Gastrocnemius medialis (tissue), 4 donors: ENCODE measurements at regions of chr16 and their contacts with region 1.

Region 1: GRCh38 chr16:46853713-46854443 is 22.9 kb upstream of the C16orf87 start:
- DNase-seq: peak; percentile 58 to 72
- ATAC-seq: peak; percentile 77 to 78
- H3K4me3 ChIP-seq: no peak overlapping the region
- H3K27ac ChIP-seq: no peak overlapping the region
- H3K4me1 ChIP-seq: peaks cover 8 to 14% of the 10 kb centered on the region in 2 donors
- H3K27me3 ChIP-seq: no peaks in the 10 kb centered on the region
- CTCF ChIP-seq: peak; percentile 78 to 92 (median 88)
- POLR2A ChIP-seq: no peak

Region 2: GRCh38 chr16:46899443-46900143 is 45.7 kb after region 1 on chr16:
- in situ Hi-C with region 1: loop called in 2 of 4 experiments (anchors 5 kb)
- intact Hi-C with region 1: loop called (anchors 2 kb)
- DNase-seq: no peak
- ATAC-seq: no peak
- H3K4me3 ChIP-seq: no peak overlapping the region
- H3K27ac ChIP-seq: peak overlapping the region; percentile 48 to 63 (median 56)
- H3K4me1 ChIP-seq: peaks cover 28 to 39% of the 10 kb centered on the region in 2 donors
- H3K27me3 ChIP-seq: no peaks in the 10 kb centered on the region
- CTCF ChIP-seq: no peak
- POLR2A ChIP-seq: no peak

Region 3: DNA sequence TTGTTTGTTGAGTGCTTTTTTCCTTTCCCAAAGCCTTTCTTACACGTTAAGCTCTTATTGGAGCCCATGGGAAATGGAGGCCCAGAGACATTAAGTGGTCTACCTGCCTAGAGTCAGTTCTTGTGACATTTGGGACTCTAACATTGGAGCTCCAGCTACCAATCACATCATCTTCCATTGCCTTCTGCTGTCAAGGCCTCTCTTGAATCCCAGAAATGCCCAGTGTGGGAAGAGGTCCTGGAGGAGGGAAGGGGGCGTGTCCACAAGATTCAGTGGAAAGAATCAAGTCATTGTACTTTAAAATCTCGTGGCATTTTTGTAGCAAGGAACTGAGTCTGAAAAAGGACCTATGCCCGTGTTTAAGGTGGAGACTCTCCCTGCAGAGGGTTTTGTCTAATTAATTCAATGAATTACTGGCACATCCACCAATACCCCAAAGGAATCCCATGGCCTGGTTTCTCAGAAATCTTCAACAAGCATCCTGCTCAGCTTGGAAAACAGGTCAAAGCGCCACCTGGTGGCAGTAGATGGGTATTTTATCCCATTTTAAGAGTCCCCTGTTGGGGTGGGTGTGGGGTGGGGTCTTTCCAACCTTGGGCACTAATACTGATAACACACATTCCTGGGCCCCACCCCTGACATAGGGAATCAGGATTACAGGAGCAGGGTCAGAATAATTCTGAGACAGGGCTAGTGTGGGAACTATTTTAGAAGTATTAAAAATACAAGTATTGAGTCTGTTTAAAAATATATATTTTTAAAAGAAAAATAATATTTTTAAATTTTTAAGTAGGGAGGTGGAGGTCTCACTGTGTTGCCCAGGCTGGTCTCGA is 54.9 kb after region 1 on chr16:
- in situ Hi-C with region 1: loop called (anchors 5 kb)
- intact Hi-C with region 1: loop called (anchors 1 kb)
- DNase-seq: no peak
- ATAC-seq: peak; percentile 53 to 72
- H3K4me3 ChIP-seq: no peak overlapping the region
- H3K27ac ChIP-seq: peak overlapping the region in 2 of 4 donors; percentile 12 to 32
- H3K4me1 ChIP-seq: peaks cover 15 to 17% of the 10 kb centered on the region in 2 donors
- H3K27me3 ChIP-seq: no peaks in the 10 kb centered on the region
- CTCF ChIP-seq: peak; percentile 54 to 90 (median 83)
- POLR2A ChIP-seq: no peak

Region 4: DNA sequence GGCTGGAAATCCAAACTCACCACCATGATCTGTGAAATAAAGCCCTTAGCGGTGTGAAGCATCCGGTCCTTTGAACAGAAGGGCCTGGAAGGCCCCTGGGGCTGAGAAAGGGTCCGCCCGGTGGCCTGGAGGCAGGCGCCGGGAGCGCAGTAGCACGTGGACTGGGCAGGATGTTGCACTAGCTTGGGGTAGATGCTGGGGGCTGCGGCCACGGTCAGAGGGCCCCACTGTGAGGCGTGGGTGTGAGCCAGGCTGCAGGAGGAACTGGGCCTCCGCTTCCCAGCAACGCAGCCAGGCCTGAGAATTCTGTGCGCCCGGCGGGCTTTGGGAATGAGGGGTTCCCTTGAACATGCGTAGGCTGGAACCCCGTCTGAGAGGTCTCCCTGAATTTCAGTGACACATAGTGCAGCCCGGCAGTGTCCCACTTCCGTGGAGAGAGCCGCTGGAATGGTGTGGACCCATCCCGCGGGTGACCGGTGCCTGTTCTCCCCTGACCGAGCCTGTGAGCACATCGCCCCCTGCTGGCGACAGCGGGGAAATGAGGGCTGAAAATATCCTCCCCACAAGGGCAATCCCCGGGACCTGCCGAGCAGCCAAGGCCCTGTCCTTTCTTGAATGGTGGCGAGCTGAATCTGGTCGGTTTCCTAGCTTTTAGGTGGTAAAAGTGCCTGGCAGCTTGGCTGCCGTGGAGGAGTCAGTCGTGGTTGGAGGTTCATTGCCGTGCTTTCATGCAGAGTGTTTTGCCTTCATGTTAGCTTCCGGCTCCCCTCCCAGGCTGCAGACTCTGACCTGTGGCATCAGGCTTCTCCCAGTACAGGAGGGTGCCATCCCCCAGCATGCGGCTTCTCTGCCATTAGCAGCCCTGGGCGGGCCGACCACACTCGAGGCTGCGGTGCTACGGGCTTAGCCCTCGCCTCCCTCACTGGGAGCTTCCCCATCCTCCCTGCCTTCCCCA is 75.8 kb after region 1 on chr16:
- in situ Hi-C with region 1: no loop called
- intact Hi-C with region 1: loop called (anchors 2 kb)
- DNase-seq: peak; percentile 34 to 68
- ATAC-seq: peak; percentile 34 to 74
- H3K4me3 ChIP-seq: no peak overlapping the region
- H3K27ac ChIP-seq: peak overlapping the region in 3 of 4 donors; percentile 7 to 58 (median 35)
- H3K4me1 ChIP-seq: peaks cover 10 to 22% of the 10 kb centered on the region in 2 donors
- H3K27me3 ChIP-seq: no peaks in the 10 kb centered on the region
- CTCF ChIP-seq: peak; percentile 61 to 88 (median 83)
- POLR2A ChIP-seq: no peak

Region 5: DNA sequence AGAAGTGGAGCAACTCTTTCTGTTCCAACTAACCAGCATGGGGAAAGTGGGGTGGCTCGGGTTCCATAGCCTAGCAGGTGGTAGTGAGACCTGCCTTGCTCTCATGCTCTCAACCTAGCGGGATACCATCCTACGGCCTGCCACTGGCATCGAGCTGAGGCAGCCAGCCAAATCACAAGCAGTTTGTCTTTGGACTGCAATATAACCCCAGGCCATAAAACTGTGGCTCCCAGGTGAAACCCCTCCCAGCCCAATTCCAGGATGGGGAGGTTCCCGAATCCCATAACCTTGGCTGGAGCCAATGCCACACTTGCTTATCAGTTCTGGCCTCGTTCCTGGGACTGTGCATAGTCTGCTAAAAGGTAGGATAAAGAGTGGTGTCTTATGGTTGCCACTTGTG is 445.7 kb after region 1 on chr16:
- in situ Hi-C with region 1: no loop called
- intact Hi-C with region 1: no loop called
- DNase-seq: no peak
- ATAC-seq: no peak
- H3K4me3 ChIP-seq: no peak overlapping the region
- H3K27ac ChIP-seq: no peak overlapping the region
- H3K4me1 ChIP-seq: no peaks in the 10 kb centered on the region
- H3K27me3 ChIP-seq: no peaks in the 10 kb centered on the region
- CTCF ChIP-seq: no peak
- POLR2A ChIP-seq: no peak